Activated T-helper 1 cell treated with anti-CD3 and anti-CD28 coated beads, Interleukin-12 subunit alpha, Interleukin-12 subunit beta, Interleukin-2, Interleukin-4 antibody, amounts not matched to agents 30 ng/mL and 10 ng/mL and 1 ng/mL, durations not matched to agents 14 hours and 24 hours and 36 hours (primary cell): ENCODE measurements at regions of chr2 and their contacts with region 1.

Region 1: DNA sequence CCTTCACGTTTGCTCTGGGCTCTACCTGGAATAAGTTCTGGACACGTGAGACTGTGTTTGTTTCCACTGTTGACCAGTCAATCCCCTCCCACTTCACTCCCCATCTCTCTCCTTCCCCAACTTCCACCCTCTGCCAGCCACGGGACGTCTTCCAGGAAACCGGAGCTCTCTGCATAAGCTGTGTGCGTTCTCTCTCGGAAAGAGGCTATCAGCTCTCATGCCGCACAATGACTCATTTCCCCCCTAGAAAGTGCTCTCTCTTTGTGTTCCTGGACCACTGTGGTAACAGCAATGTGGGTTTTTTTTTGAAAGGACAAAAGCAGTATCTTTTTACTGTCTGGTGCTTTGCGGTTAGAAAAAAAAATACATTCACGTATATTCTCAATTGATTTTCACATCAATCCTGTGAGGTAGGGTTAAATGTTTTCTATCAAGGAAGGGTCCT is 10.2 kb downstream of the PROKR1 start:
- DNase-seq: peak; percentile 51
- H3K4me3 Mint-ChIP-seq: peak overlapping the region; percentile 8
- H3K27ac Mint-ChIP-seq: peak overlapping the region; percentile 64
- H3K4me1 Mint-ChIP-seq: peaks cover 47% of the 10 kb centered on the region
- H3K27me3 Mint-ChIP-seq: peaks cover 26% of the 10 kb centered on the region

Region 2: GRCh38 chr2:68411397-68412126 is 242.0 kb before region 1 on chr2:
- intact Hi-C with region 1: no loop called
- DNase-seq: no peak
- H3K4me3 Mint-ChIP-seq: no peak overlapping the region
- H3K27ac Mint-ChIP-seq: no peak overlapping the region
- H3K4me1 Mint-ChIP-seq: peaks cover 10% of the 10 kb centered on the region
- H3K27me3 Mint-ChIP-seq: peaks cover 15% of the 10 kb centered on the region

Region 3: GRCh38 chr2:68448671-68449653 is 204.6 kb before region 1 on chr2:
- intact Hi-C with region 1: no loop called
- DNase-seq: no peak
- H3K4me3 Mint-ChIP-seq: no peak overlapping the region
- H3K27ac Mint-ChIP-seq: no peak overlapping the region
- H3K4me1 Mint-ChIP-seq: no peaks in the 10 kb centered on the region
- H3K27me3 Mint-ChIP-seq: peaks cover 8% of the 10 kb centered on the region

Region 4: DNA sequence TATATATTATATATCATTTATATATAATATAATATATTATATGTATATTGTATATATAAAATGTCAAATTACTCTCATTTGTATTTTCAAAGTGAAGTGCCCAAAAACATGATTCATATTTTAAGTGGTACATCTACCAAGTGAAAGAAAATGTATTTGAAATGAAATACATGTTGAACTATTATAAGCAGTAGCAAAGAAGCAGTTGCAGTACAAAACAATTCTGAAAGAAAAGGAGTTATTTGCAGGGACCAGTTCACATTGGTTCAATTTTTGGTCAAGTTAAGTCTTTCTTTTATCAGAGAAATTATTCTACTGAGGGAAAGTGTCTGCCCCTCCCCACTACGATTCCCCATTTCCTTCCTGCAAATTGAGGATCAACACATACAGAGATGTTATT is 134.3 kb before region 1 on chr2:
- intact Hi-C with region 1: loop called (anchors 1 kb)
- DNase-seq: no peak
- H3K4me3 Mint-ChIP-seq: no peak overlapping the region
- H3K27ac Mint-ChIP-seq: no peak overlapping the region
- H3K4me1 Mint-ChIP-seq: peaks cover 24% of the 10 kb centered on the region
- H3K27me3 Mint-ChIP-seq: no peaks in the 10 kb centered on the region

Region 5: GRCh38 chr2:68663371-68664156 is 10.0 kb after region 1 on chr2:
- intact Hi-C with region 1: loop called (anchors 1 kb)
- DNase-seq: no peak
- H3K4me3 Mint-ChIP-seq: no peak overlapping the region
- H3K27ac Mint-ChIP-seq: no peak overlapping the region
- H3K4me1 Mint-ChIP-seq: peaks cover 10% of the 10 kb centered on the region
- H3K27me3 Mint-ChIP-seq: peaks cover 18% of the 10 kb centered on the region

Region 6: DNA sequence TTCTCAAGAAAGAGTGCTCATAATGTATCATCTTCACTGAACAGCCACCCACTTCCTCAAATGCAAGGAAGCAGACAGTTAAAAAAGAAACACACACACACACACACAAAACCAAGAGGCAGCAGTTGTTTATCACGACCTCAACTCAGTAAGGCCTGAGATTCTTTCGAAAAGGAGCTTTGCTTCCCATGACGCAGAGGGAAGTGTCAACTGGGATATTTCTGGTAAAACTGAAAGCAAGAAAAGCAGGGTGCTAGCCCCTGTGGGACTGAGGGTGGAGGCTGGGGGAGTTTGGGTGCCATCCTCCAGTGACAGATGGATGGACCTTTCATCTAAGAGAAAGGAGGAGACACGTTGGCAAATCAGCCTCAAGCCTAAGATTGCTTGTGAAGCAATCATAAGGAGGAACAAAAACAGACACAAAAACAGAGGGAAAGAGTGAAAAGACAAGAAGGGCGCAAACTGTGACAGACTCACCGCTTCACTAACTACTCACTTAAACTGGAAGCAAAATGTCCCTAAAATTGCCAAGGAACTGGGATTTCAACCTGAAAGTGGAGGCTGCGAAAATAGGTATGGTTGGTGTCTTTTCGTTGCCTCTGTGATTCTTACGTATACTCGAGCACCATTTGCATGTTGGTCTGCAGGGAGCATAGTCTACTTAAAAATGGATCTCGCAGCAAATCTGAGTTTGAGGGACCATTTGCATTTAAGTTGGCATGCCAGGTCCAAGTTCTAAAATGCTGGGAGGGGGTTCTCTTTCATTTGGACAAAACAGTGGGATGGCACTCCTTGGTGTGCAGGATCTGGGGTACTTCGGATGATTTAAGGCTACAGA is 81.3 kb after region 1 on chr2 and contains the start of gene ARHGAP25:
- intact Hi-C with region 1: loop called (anchors 2 kb)
- DNase-seq: peak; percentile 61
- H3K4me3 Mint-ChIP-seq: no peak within 1 kb of the TSS
- H3K27ac Mint-ChIP-seq: no peak within 1 kb of the TSS
- H3K4me1 Mint-ChIP-seq: peaks cover 42% of the 10 kb centered on the region
- H3K27me3 Mint-ChIP-seq: no peaks in the 10 kb centered on the region
- total RNA-seq, gene ARHGAP25: 71.6 and 74.2 TPM in 2 replicates

Region 7: DNA sequence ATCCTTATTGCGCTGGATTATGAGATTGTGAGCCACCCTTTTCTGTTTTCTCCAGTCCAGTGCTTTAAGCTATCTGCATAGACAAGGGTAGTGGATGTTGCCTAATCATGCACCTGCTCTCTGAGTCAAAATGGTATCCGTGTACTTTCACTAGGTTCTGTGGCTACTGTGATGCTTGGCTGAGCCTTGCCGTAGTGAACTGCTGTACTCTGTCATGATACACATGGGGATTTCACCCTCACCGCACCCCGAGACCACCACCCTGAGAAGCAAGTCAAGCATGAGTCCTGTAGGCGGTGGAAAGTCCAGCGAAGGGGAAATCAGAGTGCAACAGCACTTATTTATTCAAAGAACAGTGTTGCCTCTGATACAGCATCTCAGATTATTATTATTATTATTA is 136.0 kb after region 1 on chr2:
- intact Hi-C with region 1: no loop called
- DNase-seq: no peak
- H3K4me3 Mint-ChIP-seq: no peak overlapping the region
- H3K27ac Mint-ChIP-seq: no peak overlapping the region
- H3K4me1 Mint-ChIP-seq: peaks cover 42% of the 10 kb centered on the region
- H3K27me3 Mint-ChIP-seq: no peaks in the 10 kb centered on the region

Region 8: GRCh38 chr2:68832233-68832869 is 178.8 kb after region 1 on chr2:
- intact Hi-C with region 1: loop called (anchors 5 kb)
- DNase-seq: no peak
- H3K4me3 Mint-ChIP-seq: peak overlapping the region; percentile 62
- H3K27ac Mint-ChIP-seq: peak overlapping the region; percentile 88
- H3K4me1 Mint-ChIP-seq: peaks cover 86% of the 10 kb centered on the region
- H3K27me3 Mint-ChIP-seq: no peaks in the 10 kb centered on the region

Region 9: GRCh38 chr2:69054431-69054830 is 400.9 kb after region 1 on chr2:
- intact Hi-C with region 1: loop called (anchors 2 kb)
- DNase-seq: peak; percentile 8
- H3K4me3 Mint-ChIP-seq: no peak overlapping the region
- H3K27ac Mint-ChIP-seq: no peak overlapping the region
- H3K4me1 Mint-ChIP-seq: peaks cover 14% of the 10 kb centered on the region
- H3K27me3 Mint-ChIP-seq: peaks cover 54% of the 10 kb centered on the region